Right ventricle myocardium inferior (tissue), 1 donor: ENCODE measurements at regions of chr3 and their contacts with region 1.

Region 1: GRCh38 chr3:196639483-196640296 is at the start of gene NRROS:
- DNase-seq: peak; percentile 89
- ATAC-seq: peak; percentile 88
- total RNA-seq, gene NRROS: 3.1 TPM

Region 2: DNA sequence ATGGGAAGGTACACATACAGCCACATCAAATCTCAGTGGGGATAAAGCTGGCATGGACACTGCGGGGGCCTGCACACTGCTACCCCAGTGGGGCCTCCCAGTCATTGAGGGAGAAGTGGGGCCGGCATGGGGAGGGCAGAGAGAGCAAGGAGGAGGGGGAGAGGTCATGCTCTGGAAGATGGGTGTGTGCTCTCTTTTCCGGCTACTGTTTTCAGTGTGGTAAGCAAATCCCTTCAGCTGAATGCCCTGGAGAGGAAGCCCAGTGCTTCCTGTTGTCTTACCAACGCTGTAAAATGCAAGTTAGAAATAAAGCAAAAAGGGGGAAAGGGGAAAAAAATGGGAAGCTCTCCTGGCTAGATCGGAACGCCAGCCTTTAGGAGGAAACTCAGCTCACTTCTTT is 30.6 kb after region 1 on chr3:
- intact Hi-C with region 1: loop called (anchors 5 kb)
- DNase-seq: no peak
- ATAC-seq: peak; percentile 76

Region 3: DNA sequence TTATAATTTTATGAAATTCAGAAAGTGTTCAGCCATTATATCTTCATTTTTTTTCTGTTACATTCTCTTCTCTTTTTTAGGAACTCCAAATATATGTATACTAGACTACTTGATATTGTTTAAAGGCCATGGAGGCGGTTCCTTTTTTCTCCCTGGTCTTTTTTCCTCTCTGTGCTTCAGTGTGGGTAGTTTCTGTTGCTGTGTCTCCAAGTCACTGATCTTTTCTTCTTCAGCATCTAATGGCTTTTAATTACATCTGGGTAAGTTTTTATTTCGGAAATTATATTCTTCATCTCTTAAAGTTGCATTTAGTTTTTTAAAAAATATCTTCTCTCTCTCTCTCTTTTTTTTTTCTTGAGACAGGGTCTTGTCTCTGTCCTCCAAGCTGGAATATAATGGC is 81.4 kb after region 1 on chr3:
- intact Hi-C with region 1: no loop called
- DNase-seq: no peak
- ATAC-seq: no peak

Region 4: DNA sequence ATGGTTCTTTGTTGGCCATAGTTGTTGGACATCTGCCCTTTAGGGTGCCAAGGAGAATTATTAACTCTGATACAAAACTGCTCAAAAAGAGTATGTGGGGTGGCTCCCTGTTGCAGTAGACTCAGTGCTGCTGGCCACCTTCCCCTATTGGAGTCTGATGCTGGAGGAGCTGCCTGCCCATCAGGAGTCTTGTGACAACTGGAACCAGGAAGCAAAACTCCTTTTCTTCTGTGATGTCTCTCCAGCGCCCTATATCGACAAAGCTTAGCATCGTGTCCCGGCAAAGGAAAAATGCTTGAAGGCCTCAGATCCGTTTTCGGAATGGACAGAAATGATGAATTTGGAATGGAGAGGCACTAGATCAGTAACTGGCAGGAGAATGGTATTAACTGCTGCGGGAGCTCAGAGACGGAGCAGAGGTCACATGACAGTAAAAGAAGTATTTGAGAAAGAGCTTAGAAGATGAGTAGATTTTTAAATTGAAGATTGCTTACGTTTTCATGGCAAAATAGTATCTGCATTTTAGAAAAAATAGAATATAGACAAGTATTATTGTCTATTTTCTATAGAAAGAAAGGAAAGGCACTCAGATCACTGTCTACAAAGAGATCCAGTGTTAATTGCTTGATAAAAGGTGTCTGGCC is 123.6 kb after region 1 on chr3:
- intact Hi-C with region 1: no loop called
- DNase-seq: no peak
- ATAC-seq: no peak